ENCODE measurements at regions of chr15 and their contacts with region 1.

Region 1: DNA sequence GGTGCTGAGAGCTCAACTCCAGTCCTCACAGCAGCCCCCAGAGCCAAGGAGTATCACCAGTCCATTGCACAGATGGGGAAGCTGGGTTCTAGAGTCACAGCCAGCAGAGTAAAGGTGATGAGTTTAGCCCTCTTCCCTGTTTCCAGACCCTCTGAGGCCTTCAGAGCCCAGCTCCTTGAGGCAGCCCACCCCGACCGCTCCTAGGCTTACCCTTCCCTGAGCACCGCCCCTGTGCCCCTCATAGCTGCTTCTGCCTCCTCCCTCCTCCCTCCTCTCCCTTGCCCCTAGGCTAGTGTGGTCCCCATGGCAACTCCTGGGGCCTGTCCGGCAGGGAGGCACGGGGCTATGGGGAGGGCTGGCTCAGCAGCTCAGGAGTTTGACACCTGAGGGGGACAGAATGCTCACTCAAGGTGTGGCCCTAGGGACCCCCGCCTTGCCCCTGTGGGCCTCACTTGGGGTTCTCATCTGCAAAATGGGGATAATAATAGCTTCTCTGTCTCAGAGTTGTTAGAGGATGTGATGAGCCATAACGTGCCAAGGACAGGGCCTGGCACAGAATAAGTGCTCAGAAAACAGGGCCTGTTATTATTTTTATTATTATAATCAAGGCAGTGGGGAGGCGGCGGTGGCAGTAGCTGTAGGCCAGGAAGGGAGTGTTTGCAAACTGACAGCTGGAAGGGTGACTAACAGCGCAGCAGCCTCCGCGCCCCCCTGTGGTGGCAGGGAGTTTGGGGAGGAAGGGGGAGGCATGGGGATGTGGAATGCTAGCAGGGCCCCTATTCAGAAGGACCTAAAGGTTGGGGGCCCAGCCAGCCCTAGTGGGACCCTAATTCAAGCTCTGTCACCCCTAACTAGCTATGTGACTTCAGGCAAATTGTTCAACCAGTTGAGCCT is 11.5 kb downstream of the CSK start:
- DNase-seq: peak; percentile 86
- ATAC-seq: peak; percentile 31
- H3K4me3 Mint-ChIP-seq: peak overlapping the region; percentile 19
- H3K27ac Mint-ChIP-seq: peak overlapping the region; percentile 83
- H3K4me1 Mint-ChIP-seq: peaks cover 85% of the 10 kb centered on the region
- H3K27me3 Mint-ChIP-seq: no peaks in the 10 kb centered on the region
- CTCF ChIP-seq: peak; percentile 58

Region 2: DNA sequence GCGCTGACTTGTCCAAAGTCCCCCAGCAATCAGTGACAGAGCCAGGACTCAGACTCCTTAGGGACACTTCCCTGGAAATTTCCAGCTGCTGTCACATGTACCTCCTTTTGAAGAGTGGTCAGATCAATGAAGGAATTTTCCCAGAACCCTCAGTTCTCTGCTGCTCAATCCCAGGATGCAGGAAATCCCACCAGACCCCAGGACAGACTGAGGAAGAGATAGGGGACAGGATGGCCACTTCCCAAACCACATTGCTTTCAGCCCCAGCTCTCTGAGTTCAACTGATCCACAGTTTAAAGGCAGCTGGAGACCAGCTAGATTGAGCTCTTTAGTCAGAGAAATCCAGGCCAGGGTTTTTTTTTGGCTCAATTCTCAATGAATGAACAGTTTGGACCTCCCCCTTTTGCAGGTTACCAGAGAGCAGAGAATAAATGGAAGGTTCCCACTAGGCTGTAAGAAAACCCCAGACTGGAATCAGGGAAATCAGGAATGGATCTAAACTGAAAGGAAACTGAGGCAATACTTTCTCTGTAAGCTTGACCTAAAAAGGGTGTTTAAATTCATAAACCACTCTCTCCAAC is 69.5 kb before region 1 on chr15:
- CTCF ChIA-PET with region 1: no interaction called
- POLR2A ChIA-PET with region 1: no interaction called
- intact Hi-C with region 1: no loop called
- DNase-seq: no peak
- ATAC-seq: peak; percentile 31
- H3K4me3 Mint-ChIP-seq: peak overlapping the region; percentile 20
- H3K27ac Mint-ChIP-seq: no peak overlapping the region
- H3K4me1 Mint-ChIP-seq: peaks cover 9% of the 10 kb centered on the region
- H3K27me3 Mint-ChIP-seq: peaks cover 16% of the 10 kb centered on the region
- CTCF ChIP-seq: no peak

Region 3: GRCh38 chr15:74808073-74808755 is 14.8 kb after region 1 on chr15:
- CTCF ChIA-PET with region 1: interaction called, 9 read pairs
- POLR2A ChIA-PET with region 1: interaction called, 15 read pairs
- intact Hi-C with region 1: no loop called
- DNase-seq: no peak
- ATAC-seq: no peak
- H3K4me3 Mint-ChIP-seq: no peak overlapping the region
- H3K27ac Mint-ChIP-seq: no peak overlapping the region
- H3K4me1 Mint-ChIP-seq: peaks cover 17% of the 10 kb centered on the region
- H3K27me3 Mint-ChIP-seq: no peaks in the 10 kb centered on the region
- CTCF ChIP-seq: no peak

Region 4: DNA sequence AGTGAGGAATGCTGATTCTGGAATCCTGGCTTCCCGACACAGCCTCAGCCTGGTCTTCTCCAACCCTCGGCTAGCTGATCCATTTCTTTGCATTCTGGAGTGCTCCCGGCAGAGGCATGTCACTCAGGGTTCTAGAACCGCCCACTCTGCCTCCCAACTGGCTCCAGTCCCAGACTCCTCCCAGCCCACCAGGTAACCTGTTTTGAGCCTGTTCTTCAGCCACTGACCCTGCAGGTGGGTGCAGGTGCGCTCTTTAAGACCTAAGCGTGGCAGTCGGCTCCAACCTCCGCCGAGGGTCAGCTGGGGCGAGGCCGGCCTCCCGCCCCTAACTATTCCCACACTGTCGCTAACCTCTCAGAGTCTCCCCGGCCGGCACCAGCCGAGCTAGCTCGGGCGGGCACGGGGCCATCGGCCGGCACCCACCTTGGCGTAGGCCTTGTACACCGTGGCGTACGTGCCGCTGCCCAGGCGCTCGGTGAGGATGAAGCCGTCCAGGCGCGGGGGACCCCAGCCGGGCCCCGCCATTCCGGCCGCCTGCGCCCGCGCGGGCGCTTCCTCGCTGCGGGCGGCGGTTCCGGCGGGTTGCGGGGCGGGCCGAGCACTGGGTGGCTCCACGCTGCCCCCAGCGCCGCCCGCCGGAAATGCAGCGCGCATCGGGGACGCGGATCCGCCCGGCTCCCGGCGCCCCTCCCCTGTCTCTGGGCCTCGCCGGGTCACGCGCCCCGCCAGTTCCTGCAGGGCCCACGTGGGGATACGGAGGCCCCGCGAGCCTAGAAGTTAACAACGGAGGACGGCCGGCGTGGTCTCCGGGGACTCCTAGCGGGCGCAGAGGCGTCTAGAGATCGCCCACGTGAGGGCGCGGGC is 49.4 kb after region 1 on chr15 and contains the start of gene ULK3:
- CTCF ChIA-PET with region 1: interaction called, 12 read pairs
- POLR2A ChIA-PET with region 1: interaction called, 3 read pairs
- intact Hi-C with region 1: no loop called
- DNase-seq: peak; percentile 94
- ATAC-seq: peak; percentile 92
- H3K4me3 Mint-ChIP-seq: peak within 1 kb of the TSS; percentile 90
- H3K27ac Mint-ChIP-seq: peak within 1 kb of the TSS; percentile 94
- H3K4me1 Mint-ChIP-seq: peaks cover 44% of the 10 kb centered on the region
- H3K27me3 Mint-ChIP-seq: no peaks in the 10 kb centered on the region
- CTCF ChIP-seq: peak; percentile 89
- total RNA-seq, gene ULK3: 45.9 to 49.3 TPM

Region 5: DNA sequence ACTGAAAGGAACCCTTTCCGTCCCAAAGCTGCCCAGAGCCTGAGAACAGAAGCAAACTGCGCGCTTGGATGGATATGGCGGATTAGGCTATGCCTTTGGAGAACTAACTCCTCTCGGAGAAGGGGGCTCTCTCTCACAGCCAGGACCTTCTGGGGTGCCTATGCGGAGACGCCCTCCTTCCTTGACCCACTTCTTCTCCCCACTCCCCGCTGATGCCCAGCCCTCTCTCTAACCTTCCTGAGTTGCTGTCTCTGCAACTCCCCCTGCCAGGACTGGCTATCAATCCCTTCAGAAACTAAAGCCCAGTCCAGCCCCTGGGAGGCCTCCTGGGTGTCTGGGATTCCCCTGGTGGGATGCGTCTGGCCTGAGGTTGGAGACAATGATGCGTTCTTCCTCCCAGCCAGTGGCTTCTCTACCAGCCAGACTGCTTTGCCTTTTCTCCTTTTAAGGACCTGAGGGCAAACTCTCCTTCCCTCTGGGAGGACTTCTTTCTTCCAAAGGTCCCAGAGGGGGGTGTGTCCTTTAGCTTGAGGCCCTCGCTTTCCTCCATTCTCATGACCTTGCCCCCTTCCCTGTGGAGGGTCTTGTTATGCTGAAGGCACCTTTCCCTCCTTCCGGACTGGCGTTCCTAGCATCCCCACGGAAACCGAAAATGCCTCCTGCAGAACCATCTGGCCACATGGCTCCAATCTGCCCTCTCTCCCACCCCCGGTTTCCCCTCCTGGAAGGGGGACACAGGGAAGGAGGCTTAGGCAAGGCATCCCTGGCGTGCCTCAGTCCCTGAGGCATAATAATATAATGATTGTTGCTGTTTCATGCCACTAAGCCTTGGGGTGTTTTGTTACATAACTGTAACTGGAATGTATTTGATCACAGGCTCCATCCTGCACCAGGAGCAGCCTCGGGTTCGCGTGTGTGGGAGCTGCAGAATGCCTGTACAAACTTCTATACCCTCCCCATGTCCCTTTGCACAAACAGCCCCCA is 344.9 kb after region 1 on chr15:
- CTCF ChIA-PET with region 1: no interaction called
- POLR2A ChIA-PET with region 1: no interaction called
- intact Hi-C with region 1: no loop called
- DNase-seq: no peak
- ATAC-seq: no peak
- H3K4me3 Mint-ChIP-seq: no peak overlapping the region
- H3K27ac Mint-ChIP-seq: no peak overlapping the region
- H3K4me1 Mint-ChIP-seq: peaks cover 2% of the 10 kb centered on the region
- H3K27me3 Mint-ChIP-seq: no peaks in the 10 kb centered on the region
- CTCF ChIP-seq: no peak